ENCODE measurements at regions of chr20 and their contacts with region 1.

Region 1: GRCh38 chr20:958936-959815 is 42.9 kb downstream of the RSPO4 start:
- DNase-seq: no peak
- ATAC-seq: no peak
- H3K4me3 ChIP-seq: no peak overlapping the region
- H3K27ac ChIP-seq: no peak overlapping the region
- H3K4me1 ChIP-seq: no peaks in the 10 kb centered on the region
- H3K27me3 ChIP-seq: peaks cover 0 to 8% of the 10 kb centered on the region in 2 donors
- CTCF ChIP-seq: no peak
- POLR2A ChIP-seq: no peak

Region 2: GRCh38 chr20:208942-209566 is 750.1 kb before region 1 on chr20:
- intact Hi-C with region 1: no loop called
- DNase-seq: peak in 2 of 4 donors; percentile 8 to 44
- ATAC-seq: peak; percentile 56
- H3K4me3 ChIP-seq: no peak overlapping the region
- H3K27ac ChIP-seq: no peak overlapping the region
- H3K4me1 ChIP-seq: no peaks in the 10 kb centered on the region
- H3K27me3 ChIP-seq: no peaks in the 10 kb centered on the region
- CTCF ChIP-seq: peak in 6 of 7 experiments; percentile 39 to 64 (median 58)
- POLR2A ChIP-seq: no peak

Region 3: DNA sequence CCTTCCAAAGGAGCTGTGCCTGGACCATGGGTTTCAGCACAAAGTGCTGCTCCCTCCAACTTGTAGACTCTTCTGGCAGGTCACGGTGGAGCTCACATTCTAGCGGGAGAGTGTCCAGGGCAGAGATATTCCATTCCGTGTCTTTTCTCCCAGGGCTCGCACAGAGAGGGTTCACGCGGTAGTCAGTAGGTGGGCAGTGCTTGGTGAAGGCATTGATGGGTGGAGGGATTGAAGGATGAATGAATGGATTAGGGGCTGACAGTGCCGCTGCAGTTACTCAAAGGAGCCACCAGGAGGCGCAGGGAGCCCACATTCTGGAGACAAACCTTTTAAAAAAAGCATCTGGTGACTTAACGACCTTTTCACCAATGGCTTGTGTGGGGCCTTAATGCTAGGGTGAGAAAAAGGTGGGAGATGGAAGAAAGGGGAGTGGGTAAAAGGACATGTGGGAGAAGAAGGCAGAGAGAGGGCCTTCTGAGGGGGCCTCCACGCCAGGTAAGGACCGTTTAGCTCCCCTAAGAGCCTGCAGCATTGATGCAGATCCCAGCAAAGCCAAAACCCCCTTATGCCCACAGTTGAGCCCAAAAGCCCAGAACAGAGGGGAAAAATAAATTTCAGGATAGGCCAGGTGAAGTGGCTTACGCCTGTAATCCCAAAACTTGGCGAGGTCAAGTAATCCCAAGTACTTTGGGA is 143.1 kb before region 1 on chr20:
- intact Hi-C with region 1: loop called (anchors 2 kb)
- DNase-seq: peak; percentile 59 to 74 (median 70)
- ATAC-seq: peak; percentile 47
- H3K4me3 ChIP-seq: no peak overlapping the region
- H3K27ac ChIP-seq: no peak overlapping the region
- H3K4me1 ChIP-seq: no peaks in the 10 kb centered on the region
- H3K27me3 ChIP-seq: no peaks in the 10 kb centered on the region
- CTCF ChIP-seq: peak; percentile 87 to 97 (median 96)
- POLR2A ChIP-seq: no peak

Measured in body of pancreas (tissue), 4 donors.